ENCODE measurements at regions of chr2 and their contacts with region 1.

Region 1: DNA sequence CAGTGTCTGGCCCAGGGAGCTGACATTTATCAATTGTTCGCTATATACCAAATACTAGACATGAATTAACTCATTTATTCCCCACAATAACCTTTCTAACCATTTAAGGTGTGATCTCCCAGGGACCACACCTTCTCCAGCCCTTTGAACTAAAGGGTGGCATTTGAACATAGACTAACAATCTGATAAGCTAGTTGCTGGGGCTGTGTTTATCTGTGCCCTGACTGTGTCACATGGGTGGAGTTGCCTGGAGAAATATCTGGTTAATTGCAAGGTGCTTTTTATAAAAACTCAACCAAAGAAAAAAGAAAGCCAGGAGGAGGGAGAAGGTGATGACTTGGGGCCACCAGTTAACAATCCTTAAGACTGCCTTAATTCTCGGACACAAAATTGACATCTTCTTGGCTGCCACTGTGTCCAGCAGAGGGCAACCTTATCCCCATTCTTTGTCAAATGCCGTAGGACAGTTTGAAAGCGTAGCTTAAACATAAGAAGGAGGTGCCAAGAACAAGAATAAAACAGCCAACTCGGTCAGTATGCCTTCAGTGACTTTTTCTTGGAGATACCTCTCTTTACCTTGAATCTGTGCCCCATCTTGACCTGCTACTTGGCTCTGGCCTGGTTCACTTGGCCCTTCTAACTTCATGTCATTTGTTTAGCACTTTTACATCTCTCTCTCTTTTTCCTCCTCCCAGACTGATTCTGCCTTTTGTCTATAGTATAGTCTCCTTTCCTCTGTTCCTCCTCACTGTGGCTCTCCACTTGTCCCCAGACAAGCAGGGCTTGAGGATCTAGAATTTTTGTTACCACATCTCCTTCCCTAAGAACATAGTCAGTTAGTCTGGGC is 183.4 kb downstream of the MYO3B start:
- DNase-seq: peak; percentile 48
- ATAC-seq: peak; percentile 93
- H3K4me3 ChIP-seq: no peak overlapping the region
- H3K27ac ChIP-seq: no peak overlapping the region
- H3K4me1 ChIP-seq: no peaks in the 10 kb centered on the region
- H3K27me3 ChIP-seq: peaks cover 2 to 39% of the 10 kb centered on the region in 2 experiments; a peak in 4 of 5 replicates
- CTCF ChIP-seq: peak; percentile 84
- EP300 ChIP-seq: no peak
- POLR2A ChIP-seq: no peak
- RAD21 ChIP-seq: peak; percentile 59; the same call in 1 of the 2 replicates

Region 2: GRCh38 chr2:170235860-170236679 is 125.2 kb before region 1 on chr2:
- CTCF ChIA-PET with region 1: interaction called, 3 read pairs
- POLR2A ChIA-PET with region 1: no interaction called
- in situ Hi-C with region 1: loop called (anchors 10 kb)
- intact Hi-C with region 1: no loop called
- DNase-seq: peak; percentile 54
- ATAC-seq: peak; percentile 73
- H3K4me3 ChIP-seq: no peak overlapping the region
- H3K27ac ChIP-seq: no peak overlapping the region
- H3K4me1 ChIP-seq: no peaks in the 10 kb centered on the region
- H3K27me3 ChIP-seq: peaks cover 0 to 23% of the 10 kb centered on the region in 2 experiments; a peak in 4 of 5 replicates
- CTCF ChIP-seq: peak; percentile 69
- EP300 ChIP-seq: no peak
- POLR2A ChIP-seq: no peak
- RAD21 ChIP-seq: peak; percentile 47

Region 3: DNA sequence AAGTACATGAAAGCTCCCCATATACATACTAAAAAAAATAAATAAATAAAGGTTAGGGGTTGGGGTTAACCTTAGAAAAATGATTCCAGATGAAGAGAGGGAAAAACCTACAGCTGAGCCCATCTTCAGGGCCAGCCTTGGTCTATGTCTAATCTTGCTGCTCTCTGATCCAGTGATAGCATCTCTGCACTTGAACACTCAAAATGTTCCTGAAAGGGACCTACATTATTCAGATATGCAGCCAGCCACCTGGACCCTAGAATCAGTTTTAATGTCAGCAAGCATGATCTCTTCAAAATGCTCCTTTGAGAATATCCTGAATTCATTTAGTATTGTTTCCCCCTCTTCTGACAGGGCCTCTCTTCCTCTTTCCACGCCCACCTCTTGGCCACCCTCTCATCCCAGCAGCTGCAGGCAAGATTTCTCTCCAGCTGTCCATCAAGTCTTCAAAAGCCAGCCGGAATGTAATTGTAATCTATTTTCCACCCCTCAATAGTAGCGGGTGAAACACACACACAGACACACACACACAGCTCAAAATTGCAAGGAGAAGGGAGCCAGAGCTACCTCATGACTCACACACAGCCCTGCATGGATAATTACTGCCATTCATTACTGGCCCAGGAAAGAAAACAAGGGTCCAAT is 47.8 kb before region 1 on chr2:
- CTCF ChIA-PET with region 1: no interaction called
- POLR2A ChIA-PET with region 1: no interaction called
- in situ Hi-C with region 1: no loop called
- intact Hi-C with region 1: no loop called
- DNase-seq: no peak
- ATAC-seq: no peak
- H3K4me3 ChIP-seq: no peak overlapping the region
- H3K27ac ChIP-seq: no peak overlapping the region
- H3K4me1 ChIP-seq: no peaks in the 10 kb centered on the region
- H3K27me3 ChIP-seq: no peaks in the 10 kb centered on the region
- CTCF ChIP-seq: no peak
- EP300 ChIP-seq: no peak
- POLR2A ChIP-seq: no peak
- RAD21 ChIP-seq: no peak

Region 4: DNA sequence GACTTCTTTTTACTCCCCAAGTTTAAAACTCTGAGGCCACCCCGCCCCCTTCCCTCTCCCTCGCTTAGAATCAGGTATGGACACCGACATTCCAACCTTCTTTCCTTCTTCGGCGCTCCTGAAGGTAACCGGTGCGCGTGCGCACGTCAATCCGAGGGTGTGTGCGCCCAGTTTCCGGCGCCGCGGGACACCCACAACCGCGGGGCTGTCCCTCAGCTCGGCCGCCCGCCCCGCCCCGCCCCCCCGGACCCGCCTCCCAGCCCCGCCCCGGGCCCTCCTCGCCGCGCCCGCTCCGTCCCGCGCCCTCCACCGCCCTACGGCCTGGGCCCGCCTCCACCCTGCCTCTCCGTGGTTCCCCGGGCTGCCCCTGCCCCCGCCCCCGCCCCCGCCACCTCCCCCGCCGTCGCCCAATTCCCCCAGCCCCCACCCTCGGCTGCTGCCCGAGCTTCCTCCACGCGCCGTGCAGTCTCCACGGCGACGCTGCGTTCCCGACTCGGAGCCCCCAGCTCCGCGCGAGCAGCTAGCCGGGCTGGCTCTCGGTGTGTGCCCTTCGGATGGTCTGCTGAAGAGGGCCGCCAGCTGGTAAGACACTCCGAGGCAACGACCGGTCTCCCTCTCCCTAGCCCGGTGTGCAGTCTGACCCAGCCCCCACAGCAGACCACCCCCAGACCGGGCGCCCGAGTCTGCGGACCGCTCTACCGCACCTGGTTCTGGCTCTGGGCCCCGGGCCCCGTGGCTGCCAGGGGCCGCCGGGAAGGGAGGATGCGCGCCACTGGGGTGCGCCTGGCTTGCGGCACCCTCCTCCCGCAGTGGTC is 409.5 kb after region 1 on chr2:
- CTCF ChIA-PET with region 1: no interaction called
- POLR2A ChIA-PET with region 1: no interaction called
- in situ Hi-C with region 1: no loop called
- intact Hi-C with region 1: no loop called
- DNase-seq: peak; percentile 81
- ATAC-seq: peak; percentile 95
- H3K4me3 ChIP-seq: peak overlapping the region; percentile 65 to 92 (median 87)
- H3K27ac ChIP-seq: peak overlapping the region; percentile 61
- H3K4me1 ChIP-seq: peaks cover 24% of the 10 kb centered on the region
- H3K27me3 ChIP-seq: peaks cover 0 to 14% of the 10 kb centered on the region in 2 experiments; a peak in 2 of 5 replicates
- CTCF ChIP-seq: peak; percentile 54
- EP300 ChIP-seq: no peak
- POLR2A ChIP-seq: peak in 1 of 2 experiments; percentile 23; a peak in 2 of 4 replicates
- RAD21 ChIP-seq: peak; percentile 59